ENCODE measurements at regions of chr18 and their contacts with region 1.

Region 1: DNA sequence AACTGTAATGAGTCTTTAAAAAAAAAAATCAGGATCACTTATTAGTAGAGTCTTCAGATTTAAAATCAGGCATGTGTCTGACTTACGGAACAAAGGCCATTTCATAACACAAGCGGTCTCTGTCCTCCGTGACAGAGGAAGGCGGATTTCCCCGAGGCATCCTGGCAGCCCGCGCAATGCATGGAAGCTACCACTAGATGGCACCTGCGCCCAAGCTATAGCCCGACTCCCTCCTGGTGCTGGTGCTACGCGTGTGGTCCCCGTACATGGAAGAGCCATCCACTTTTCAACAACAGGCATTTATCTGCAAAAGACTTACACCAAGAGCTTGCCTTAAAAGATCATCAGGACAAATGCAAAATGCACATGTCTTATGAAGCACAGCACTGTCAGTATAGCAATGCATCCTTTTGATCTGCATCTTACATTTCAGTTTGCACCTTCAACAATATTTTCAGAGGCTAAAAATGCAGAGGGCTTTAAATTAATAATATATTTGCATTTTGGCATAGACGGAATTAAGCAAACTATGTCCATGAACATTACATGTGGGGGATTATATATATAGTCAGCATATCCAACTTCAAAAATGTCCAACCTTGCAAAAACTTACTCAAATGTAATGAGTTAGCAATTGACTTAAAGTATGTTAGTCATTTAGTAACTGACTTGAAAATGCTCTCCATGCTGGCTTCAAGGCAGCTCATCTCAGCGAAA is 96.0 kb downstream of the ZNF516 start:
- DNase-seq: peak; percentile 80 to 92 (median 92)
- ATAC-seq: peak; percentile 91 to 92
- H3K4me3 ChIP-seq: no peak overlapping the region
- H3K27ac ChIP-seq: no peak overlapping the region
- H3K4me1 ChIP-seq: no peaks in the 10 kb centered on the region
- H3K27me3 ChIP-seq: no peaks in the 10 kb centered on the region

Region 2: GRCh38 chr18:76620321-76621170 is 221.5 kb after region 1 on chr18:
- intact Hi-C with region 1: loop called in 2 of 4 experiments (anchors 5 to 10 kb)
- DNase-seq: peak; percentile 70 to 91 (median 86)
- ATAC-seq: peak; percentile 89
- H3K4me3 ChIP-seq: peak overlapping the region; percentile 22
- H3K27ac ChIP-seq: no peak overlapping the region
- H3K4me1 ChIP-seq: peaks cover 1% of the 10 kb centered on the region
- H3K27me3 ChIP-seq: no peaks in the 10 kb centered on the region

Region 3: GRCh38 chr18:76686737-76687262 is 287.7 kb after region 1 on chr18:
- intact Hi-C with region 1: loop called in 3 of 4 experiments (anchors 5 to 10 kb)
- DNase-seq: peak; percentile 63 to 81 (median 78)
- ATAC-seq: peak; percentile 77 to 87
- H3K4me3 ChIP-seq: no peak overlapping the region
- H3K27ac ChIP-seq: no peak overlapping the region
- H3K4me1 ChIP-seq: no peaks in the 10 kb centered on the region
- H3K27me3 ChIP-seq: no peaks in the 10 kb centered on the region

Region 4: DNA sequence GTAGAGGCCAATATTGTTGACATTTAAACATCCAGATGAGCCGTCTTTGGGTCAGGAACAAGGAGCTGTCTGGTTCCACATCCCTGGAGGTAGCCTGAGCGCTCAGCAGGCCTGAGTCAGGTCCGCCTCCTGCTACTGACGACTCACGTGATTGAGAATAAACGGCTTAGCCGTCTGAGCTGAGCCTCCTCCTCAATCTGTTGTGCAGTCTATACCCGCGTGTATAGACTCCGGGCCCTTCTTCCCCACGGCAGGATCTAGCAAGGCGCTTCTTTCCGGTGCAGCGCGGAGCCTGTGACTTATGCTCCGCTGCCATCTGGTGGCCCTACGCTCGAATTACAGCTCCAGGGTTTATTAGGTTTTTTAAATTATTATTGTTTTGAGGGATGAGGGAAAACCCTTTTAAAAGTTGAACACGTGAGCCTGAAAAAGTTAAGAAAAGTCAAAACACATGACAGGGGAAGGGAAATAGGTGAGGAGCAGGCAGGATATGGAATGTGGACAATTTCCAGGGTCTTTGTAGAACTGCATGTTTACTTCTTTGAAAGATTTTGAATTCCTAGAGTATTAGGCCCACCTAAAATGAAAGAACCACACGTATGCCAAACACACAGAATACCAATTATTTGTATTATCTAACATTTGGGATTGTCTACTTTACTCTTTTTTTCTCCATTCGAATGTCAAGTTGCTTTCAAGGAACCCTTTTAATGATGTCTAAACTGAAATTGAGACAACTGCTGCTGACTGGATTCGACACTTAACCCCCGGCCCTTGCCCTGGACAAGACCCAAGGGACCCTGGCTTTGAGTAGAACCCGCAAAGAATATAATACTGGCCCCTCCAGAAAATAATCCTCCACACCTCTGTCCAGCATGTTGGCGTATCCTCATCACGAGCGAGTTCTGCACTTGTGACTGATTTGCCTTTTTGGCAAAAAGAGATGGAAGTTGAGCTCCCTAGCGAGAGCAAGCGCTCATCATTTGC is 310.9 kb after region 1 on chr18:
- intact Hi-C with region 1: loop called (anchors 1 to 10 kb)
- DNase-seq: peak; percentile 66 to 87 (median 81)
- ATAC-seq: peak; percentile 75 to 83
- H3K4me3 ChIP-seq: no peak overlapping the region
- H3K27ac ChIP-seq: no peak overlapping the region
- H3K4me1 ChIP-seq: no peaks in the 10 kb centered on the region
- H3K27me3 ChIP-seq: no peaks in the 10 kb centered on the region

Region 5: DNA sequence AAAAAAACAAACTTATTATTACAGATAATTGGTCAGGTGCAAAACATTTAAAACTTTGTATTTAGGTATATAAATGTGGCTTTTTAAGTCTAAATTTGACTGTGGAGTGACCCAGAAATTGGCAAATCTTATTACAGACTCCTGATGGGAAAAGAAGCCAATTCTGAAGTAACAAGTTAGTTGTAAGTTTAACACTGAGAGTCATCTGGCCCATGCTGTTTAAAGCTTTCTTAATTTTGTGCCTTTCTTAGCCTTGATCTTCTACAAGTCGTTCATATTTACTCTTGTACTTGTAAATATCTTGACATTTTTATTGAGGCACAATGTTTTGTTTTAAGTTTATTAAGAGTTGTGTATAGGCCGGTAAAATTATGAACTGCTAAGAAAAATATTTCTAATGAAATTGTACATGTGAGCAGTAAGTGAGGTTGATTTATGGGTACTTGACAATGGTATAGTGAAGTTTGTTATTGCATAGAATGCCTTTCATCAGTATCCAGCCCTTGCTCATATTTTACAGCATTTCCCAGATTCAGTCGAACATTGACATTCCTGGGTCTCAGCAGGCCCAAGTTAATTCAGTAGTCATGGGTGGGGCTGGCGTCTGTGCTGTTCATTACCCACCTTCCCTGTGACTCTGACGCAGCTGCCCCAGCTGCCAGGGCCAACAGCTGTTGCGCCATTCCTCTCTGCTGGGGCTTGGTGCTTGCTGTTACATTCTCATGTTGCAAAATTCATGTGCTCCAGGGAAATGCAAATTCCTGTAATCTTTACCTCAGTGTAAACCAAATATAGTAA is 544.7 kb after region 1 on chr18:
- intact Hi-C with region 1: no loop called
- DNase-seq: peak; percentile 60 to 64 (median 63)
- ATAC-seq: peak in 1 of 2 donors; percentile 56
- H3K4me3 ChIP-seq: no peak overlapping the region
- H3K27ac ChIP-seq: no peak overlapping the region
- H3K4me1 ChIP-seq: no peaks in the 10 kb centered on the region
- H3K27me3 ChIP-seq: no peaks in the 10 kb centered on the region

Measured in right cardiac atrium (tissue), 5 donors.